ENCODE measurements at regions of chr17 and their contacts with region 1.

Region 1: GRCh38 chr17:40317880-40318829 is 9.2 kb downstream of the RARA start:
- DNase-seq: peak; percentile 96
- H3K4me3 ChIP-seq: peak overlapping the region; percentile 76 to 81 (median 77)
- H3K27ac ChIP-seq: peak overlapping the region; percentile 73
- H3K4me1 ChIP-seq: peaks cover 75% of the 10 kb centered on the region
- H3K27me3 ChIP-seq: no peaks in the 10 kb centered on the region
- CTCF ChIP-seq: no peak

Region 2: GRCh38 chr17:40026816-40027613 is 291.1 kb before region 1 on chr17:
- CTCF ChIA-PET with region 1: no interaction called
- dilution Hi-C with region 1: no loop called
- in situ Hi-C with region 1: no loop called
- intact Hi-C with region 1: loop called (anchors 10 kb)
- DNase-seq: peak; percentile 76
- H3K4me3 ChIP-seq: no peak overlapping the region
- H3K27ac ChIP-seq: peak overlapping the region; percentile 87
- H3K4me1 ChIP-seq: peaks cover 60% of the 10 kb centered on the region
- H3K27me3 ChIP-seq: no peaks in the 10 kb centered on the region
- CTCF ChIP-seq: peak; percentile 77 to 91

Region 3: GRCh38 chr17:40121181-40122135 is 196.7 kb before region 1 on chr17 and contains the start of gene MSL1:
- CTCF ChIA-PET with region 1: no interaction called
- dilution Hi-C with region 1: no loop called
- in situ Hi-C with region 1: no loop called
- intact Hi-C with region 1: no loop called
- DNase-seq: peak; percentile 72
- H3K4me3 ChIP-seq: peak within 1 kb of the TSS; percentile 65 to 87 (median 75)
- H3K27ac ChIP-seq: peak within 1 kb of the TSS; percentile 68
- H3K4me1 ChIP-seq: peaks cover 6% of the 10 kb centered on the region
- H3K27me3 ChIP-seq: no peaks in the 10 kb centered on the region
- CTCF ChIP-seq: no peak
- total RNA-seq, gene MSL1: 36.8 to 72.1 TPM

Region 4: GRCh38 chr17:40264458-40265185 is 53.5 kb before region 1 on chr17:
- CTCF ChIA-PET with region 1: no interaction called
- dilution Hi-C with region 1: loop called (anchors 5 kb)
- in situ Hi-C with region 1: no loop called
- intact Hi-C with region 1: no loop called
- DNase-seq: no peak
- H3K4me3 ChIP-seq: no peak overlapping the region
- H3K27ac ChIP-seq: no peak overlapping the region
- H3K4me1 ChIP-seq: peaks cover 5% of the 10 kb centered on the region
- H3K27me3 ChIP-seq: no peaks in the 10 kb centered on the region
- CTCF ChIP-seq: no peak

Region 5: GRCh38 chr17:40303009-40303657 is 15.0 kb before region 1 on chr17:
- CTCF ChIA-PET with region 1: interaction called, 6 read pairs
- dilution Hi-C with region 1: no loop called
- in situ Hi-C with region 1: no loop called
- intact Hi-C with region 1: loop called (anchors 2 kb)
- DNase-seq: peak; percentile 45
- H3K4me3 ChIP-seq: no peak overlapping the region
- H3K27ac ChIP-seq: no peak overlapping the region
- H3K4me1 ChIP-seq: peaks cover 26% of the 10 kb centered on the region
- H3K27me3 ChIP-seq: no peaks in the 10 kb centered on the region
- CTCF ChIP-seq: peak; percentile 52 to 77

Region 6: DNA sequence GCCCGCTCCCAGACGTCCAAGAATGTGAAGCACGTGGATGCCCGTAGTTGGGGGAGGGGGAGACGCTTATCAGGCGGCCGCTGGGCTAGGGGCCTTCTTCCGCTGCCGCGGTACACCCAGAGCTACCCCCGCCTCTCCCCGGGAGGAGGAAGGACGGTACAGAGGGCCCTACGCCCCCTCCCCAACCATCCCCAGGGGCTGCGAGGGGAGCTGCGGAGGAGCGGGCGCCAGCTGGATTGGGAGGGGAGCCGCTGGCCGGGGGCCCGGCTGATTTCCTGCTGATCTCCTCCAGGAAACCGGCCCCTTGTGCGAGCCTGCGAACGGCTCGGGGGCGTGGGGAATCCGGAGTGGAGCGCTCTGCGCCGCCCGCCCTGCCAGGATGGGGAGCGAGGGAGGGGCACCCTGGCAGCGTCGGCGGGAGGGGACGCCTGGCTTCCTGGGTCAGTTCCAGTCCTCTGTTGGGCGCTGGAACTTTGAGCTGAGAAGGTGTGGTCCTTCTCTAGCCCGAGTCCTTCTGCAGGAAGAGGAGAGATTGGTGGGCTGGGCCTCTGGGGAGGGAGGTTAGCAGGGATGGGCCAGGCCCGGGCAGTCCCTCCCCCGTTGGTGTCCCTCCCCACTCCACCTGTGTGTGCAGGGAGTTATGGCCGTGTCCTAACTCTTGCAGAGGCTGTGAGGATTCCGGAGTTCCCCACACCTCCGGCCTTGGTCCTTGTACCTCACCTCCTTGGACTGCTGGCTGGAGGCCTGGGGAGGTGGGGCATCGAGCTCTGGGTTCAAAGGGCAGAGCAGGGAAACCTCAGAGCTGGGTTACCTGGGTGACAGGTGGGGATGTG is 27.2 kb after region 1 on chr17:
- CTCF ChIA-PET with region 1: interaction called, 14 read pairs
- dilution Hi-C with region 1: no loop called
- in situ Hi-C with region 1: no loop called
- intact Hi-C with region 1: loop called (anchors 1 kb)
- DNase-seq: peak; percentile 61
- H3K4me3 ChIP-seq: peak overlapping the region in 2 of 3 experiments; percentile 11 to 31
- H3K27ac ChIP-seq: no peak overlapping the region
- H3K4me1 ChIP-seq: peaks cover 80% of the 10 kb centered on the region
- H3K27me3 ChIP-seq: no peaks in the 10 kb centered on the region
- CTCF ChIP-seq: no peak

Region 7: DNA sequence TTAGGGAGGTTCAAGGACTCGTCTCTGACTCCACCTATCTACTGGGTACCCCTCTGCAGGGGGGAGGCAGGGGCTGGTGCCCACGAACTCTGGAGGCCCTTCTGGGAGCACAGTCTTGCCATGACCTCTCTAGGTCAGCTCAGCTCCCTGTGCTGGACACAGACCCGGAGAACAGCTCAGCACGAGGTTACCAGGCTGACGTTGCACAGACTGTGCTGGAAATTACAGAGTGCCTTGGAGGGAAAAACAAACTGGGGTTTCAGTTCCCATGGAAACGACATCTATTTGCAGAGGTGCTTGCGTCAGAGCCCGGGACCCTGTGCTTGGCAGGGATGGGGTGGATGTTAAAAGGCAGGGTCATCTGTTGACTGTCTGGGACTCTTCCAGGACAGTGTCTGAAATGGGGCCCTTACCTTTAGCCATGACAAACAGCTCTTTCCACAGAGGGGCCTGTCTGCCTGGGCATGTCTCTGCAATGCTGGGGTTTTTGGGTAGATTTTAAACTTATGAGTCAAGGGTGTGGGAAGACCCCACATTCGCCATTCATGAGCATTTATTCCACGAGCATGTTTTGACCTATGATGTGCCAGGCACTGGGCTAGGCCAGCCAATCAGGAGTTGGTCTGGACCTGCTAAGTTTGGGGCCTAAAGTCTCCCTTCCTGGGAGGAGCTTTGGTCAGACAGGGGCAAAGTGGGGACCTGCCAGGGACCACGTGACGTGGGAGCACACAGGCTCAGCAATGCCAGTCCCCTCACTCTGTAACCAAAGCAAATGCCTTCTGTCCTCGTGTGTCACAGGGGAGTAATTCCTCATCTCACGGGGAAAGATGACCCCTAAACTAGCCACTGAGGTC is 224.6 kb after region 1 on chr17:
- CTCF ChIA-PET with region 1: no interaction called
- dilution Hi-C with region 1: loop called (anchors 5 kb)
- in situ Hi-C with region 1: no loop called
- intact Hi-C with region 1: loop called (anchors 5 kb)
- DNase-seq: peak; percentile 96
- H3K4me3 ChIP-seq: no peak overlapping the region
- H3K27ac ChIP-seq: peak overlapping the region; percentile 87
- H3K4me1 ChIP-seq: peaks cover 62% of the 10 kb centered on the region
- H3K27me3 ChIP-seq: no peaks in the 10 kb centered on the region
- CTCF ChIP-seq: no peak

Region 8: GRCh38 chr17:40548982-40549685 is 231.0 kb after region 1 on chr17:
- CTCF ChIA-PET with region 1: no interaction called
- dilution Hi-C with region 1: loop called (anchors 5 kb)
- in situ Hi-C with region 1: no loop called
- intact Hi-C with region 1: loop called (anchors 5 kb)
- DNase-seq: peak; percentile 44
- H3K4me3 ChIP-seq: no peak overlapping the region
- H3K27ac ChIP-seq: peak overlapping the region; percentile 18
- H3K4me1 ChIP-seq: peaks cover 37% of the 10 kb centered on the region
- H3K27me3 ChIP-seq: no peaks in the 10 kb centered on the region
- CTCF ChIP-seq: no peak

Measured in mammary epithelial cell (primary cell).